ENCODE measurements at regions of chr12 and their contacts with region 1.

Region 1: GRCh38 chr12:105226219-105226618 is 9.8 kb downstream of the APPL2 start:
- DNase-seq: no peak
- H3K4me3 ChIP-seq: no peak overlapping the region
- H3K27ac ChIP-seq: no peak overlapping the region
- H3K4me1 ChIP-seq: peaks cover 2% of the 10 kb centered on the region; the same call in 1 of the 2 replicates
- H3K27me3 ChIP-seq: no peaks in the 10 kb centered on the region
- CTCF ChIP-seq: no peak

Region 2: GRCh38 chr12:105192624-105193225 is 33.5 kb before region 1 on chr12:
- CTCF ChIA-PET with region 1: no interaction called
- POLR2A ChIA-PET with region 1: no interaction called
- intact Hi-C with region 1: no loop called
- DNase-seq: no peak
- H3K4me3 ChIP-seq: no peak overlapping the region
- H3K27ac ChIP-seq: no peak overlapping the region
- H3K4me1 ChIP-seq: no peaks in the 10 kb centered on the region
- H3K27me3 ChIP-seq: no peaks in the 10 kb centered on the region
- CTCF ChIP-seq: no peak

Region 3: GRCh38 chr12:105204916-105205315 is 21.3 kb before region 1 on chr12:
- CTCF ChIA-PET with region 1: no interaction called
- POLR2A ChIA-PET with region 1: no interaction called
- intact Hi-C with region 1: no loop called
- DNase-seq: no peak
- H3K4me3 ChIP-seq: no peak overlapping the region
- H3K27ac ChIP-seq: no peak overlapping the region
- H3K4me1 ChIP-seq: no peaks in the 10 kb centered on the region
- H3K27me3 ChIP-seq: no peaks in the 10 kb centered on the region
- CTCF ChIP-seq: no peak

Region 4: DNA sequence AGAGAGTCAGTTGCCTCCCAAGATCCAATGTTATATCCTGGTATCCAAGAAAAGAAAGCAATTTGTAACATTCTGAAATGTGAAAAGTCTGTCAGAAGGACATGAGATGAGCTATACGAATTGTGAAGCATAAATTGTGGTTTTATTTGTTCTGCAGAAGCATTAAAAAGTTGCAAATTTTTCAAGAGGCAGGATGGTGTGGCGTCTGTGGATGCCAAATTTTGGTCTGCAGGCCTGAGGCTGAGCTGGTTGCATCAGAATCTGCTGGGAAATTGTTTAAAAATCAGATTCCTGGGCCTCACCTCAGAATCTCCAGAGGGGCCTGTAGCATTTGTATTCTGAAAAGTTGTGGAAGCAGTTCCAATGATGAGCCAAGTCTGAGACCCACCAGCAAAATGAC is 627.9 kb after region 1 on chr12:
- CTCF ChIA-PET with region 1: no interaction called
- POLR2A ChIA-PET with region 1: interaction called, 17 read pairs
- intact Hi-C with region 1: no loop called
- DNase-seq: no peak
- H3K4me3 ChIP-seq: no peak overlapping the region
- H3K27ac ChIP-seq: no peak overlapping the region
- H3K4me1 ChIP-seq: 0 out of 2 replicates have a peak, but pooled peaks cover under 1% of the 10 kb centered on the region
- H3K27me3 ChIP-seq: no peaks in the 10 kb centered on the region
- CTCF ChIP-seq: no peak

Measured in PC-9 (cell line).